GM12878 (cell line): ENCODE measurements at regions of chr11 and their contacts with region 1.

Region 1: DNA sequence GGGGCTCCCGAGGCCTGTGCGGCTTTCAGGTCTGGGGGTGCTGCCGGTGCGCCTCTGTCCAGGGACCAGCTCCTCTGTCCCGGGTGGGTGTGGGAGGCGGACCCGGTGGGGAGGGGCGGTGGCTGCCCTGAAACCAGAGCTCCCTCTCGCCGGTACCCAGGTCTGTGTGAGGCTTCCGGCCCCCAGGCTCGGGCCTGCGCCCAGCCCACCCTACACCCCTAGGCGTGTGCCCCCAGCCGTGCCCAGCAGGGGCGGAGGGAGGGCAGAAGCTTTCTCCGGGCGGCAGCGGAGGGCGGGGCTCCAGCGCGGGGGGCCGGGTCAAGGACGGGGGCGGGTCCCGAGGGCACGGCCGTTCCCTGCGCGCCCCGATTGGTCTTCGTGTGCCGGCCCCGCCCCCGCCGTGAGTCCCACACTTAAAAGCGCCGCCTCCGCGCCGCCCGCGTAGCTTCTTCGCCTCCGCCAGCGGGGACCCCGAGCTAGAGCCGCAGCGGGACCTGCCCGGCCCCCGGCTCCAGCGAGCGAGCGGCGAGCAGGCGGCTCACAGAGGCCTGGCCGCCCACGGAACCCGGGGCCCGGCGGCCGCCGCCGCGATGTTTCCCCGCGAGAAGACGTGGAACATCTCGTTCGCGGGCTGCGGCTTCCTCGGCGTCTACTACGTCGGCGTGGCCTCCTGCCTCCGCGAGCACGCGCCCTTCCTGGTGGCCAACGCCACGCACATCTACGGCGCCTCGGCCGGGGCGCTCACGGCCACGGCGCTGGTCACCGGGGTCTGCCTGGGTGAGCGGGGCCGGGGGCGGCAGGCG is 616 bp downstream of the PNPLA2 start:
- DNase-seq: no peak
- ATAC-seq: peak; percentile 88
- H3K4me3 ChIP-seq: peak overlapping the region; percentile 82
- H3K27ac ChIP-seq: peak overlapping the region; percentile 73
- H3K4me1 ChIP-seq: no peaks in the 10 kb centered on the region; the same call in 1 of the 2 replicates
- H3K27me3 ChIP-seq: no peaks in the 10 kb centered on the region
- CTCF ChIP-seq: peak in 1 of 3 experiments; percentile 26; a peak in 1 of 6 replicates
- EP300 ChIP-seq: no peak
- POLR2A ChIP-seq: peak; percentile 92
- RAD21 ChIP-seq: no peak

Region 2: GRCh38 chr11:830295-831117 is 11.2 kb after region 1 on chr11:
- CTCF ChIA-PET with region 1: no interaction called
- POLR2A ChIA-PET with region 1: interaction called, 33 read pairs
- RAD21 ChIA-PET with region 1: interaction called, 3 read pairs
- SMC1A ChIA-PET with region 1: no interaction called
- in situ Hi-C with region 1: no loop called
- intact Hi-C with region 1: no loop called
- DNase-seq: no peak
- ATAC-seq: peak; percentile 72
- H3K4me3 ChIP-seq: peak overlapping the region; percentile 49
- H3K27ac ChIP-seq: no peak overlapping the region
- H3K4me1 ChIP-seq: peaks cover 42% of the 10 kb centered on the region
- H3K27me3 ChIP-seq: no peaks in the 10 kb centered on the region; a peak in 3 of 4 replicates
- CTCF ChIP-seq: no peak
- EP300 ChIP-seq: no peak
- POLR2A ChIP-seq: no peak
- RAD21 ChIP-seq: no peak